ENCODE measurements at regions of chr9 and their contacts with region 1.

Region 1: DNA sequence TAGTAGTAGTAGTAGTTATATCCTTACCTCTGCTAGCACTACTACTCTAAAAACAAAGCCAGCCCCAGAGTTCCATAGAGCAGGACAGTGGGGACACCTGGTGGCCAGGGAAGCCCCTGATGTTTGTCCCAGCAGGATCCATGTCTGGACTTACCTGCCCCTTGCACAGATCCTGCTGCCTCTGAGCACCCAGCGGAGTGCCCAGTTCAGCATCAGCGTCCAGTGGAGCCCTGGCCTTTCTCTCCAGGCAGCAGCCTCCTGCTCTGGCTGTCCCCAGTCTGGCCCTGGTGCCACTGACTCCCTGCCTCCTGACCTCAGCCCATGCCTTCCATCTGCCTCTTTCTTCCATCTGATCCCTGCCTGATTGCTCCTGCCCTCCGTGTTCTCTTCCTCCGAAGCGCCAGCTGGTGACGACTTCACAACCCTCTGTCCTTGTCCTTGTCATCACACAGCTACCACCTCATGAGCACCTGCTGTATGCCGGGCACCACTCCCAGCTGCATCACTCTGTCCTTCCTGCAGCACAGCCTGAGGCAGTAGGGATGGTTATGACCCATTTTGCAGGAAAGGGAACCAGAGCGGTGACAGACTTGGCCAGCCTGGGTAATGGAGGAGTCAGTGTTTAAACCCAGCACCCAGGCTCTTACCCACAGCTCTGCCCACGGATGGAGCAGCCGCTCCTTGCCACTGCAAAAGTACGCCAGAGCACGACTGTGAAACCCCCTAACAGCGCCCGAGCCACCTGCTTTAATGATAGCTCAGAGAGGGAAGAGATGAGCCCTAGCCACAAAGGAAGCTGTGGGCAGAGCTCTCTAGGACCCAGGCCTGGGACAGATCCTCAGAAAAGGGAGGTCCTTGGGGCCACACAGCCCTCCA is 11.5 kb downstream of the SARDH start:
- DNase-seq: peak in 6 of 7 donors; percentile 19 to 78 (median 48)
- H3K4me3 ChIP-seq: no peak overlapping the region
- H3K27ac ChIP-seq: no peak overlapping the region
- H3K4me1 ChIP-seq: no peaks in the 10 kb centered on the region
- H3K27me3 ChIP-seq: no peaks in the 10 kb centered on the region
- CTCF ChIP-seq: peak; percentile 23 to 55 (median 45)
- POLR2A ChIP-seq: no peak

Region 2: GRCh38 chr9:133429641-133430161 is 296.9 kb before region 1 on chr9:
- intact Hi-C with region 1: no loop called
- DNase-seq: peak in 3 of 7 donors; percentile 17 to 41 (median 35)
- H3K4me3 ChIP-seq: no peak overlapping the region
- H3K27ac ChIP-seq: no peak overlapping the region
- H3K4me1 ChIP-seq: no peaks in the 10 kb centered on the region
- H3K27me3 ChIP-seq: peaks cover 8% of the 10 kb centered on the region
- CTCF ChIP-seq: peak in 5 of 6 experiments; percentile 18 to 46 (median 26)
- POLR2A ChIP-seq: no peak

Region 3: DNA sequence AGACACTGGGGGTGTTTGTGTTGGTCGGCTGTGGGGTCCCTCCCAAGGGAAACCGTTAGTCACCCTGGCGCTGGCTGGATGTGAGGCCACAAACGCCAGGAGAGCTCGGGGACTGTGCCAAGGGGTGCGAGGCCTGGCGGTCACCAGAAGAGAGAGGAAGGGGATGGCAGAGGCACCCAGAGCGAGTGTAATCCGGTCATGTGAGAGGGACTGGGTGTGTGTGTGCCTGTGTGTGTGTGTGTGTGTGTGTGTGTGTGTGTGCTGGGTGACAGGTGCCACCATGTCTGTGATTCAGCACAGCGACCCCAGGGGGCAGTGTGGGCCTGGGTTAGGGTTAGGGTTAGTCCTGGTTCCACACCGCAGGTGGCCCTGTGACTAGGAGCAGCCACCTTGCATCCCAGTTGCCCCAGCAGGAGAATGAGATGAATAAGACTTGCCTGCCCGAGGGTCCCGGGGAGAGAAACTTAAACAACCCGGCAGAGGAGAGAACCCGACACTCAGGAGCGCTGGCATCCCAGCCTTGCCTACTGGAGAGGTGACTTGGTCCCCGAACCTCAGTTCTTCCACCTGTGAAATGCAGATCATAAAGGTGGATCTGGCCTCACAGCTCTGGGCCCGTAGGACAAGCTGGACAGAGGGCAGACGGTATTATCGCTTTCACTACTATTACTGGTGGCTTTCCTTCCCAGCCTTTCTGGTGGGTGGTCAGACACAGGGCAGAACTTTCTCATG is 193.5 kb before region 1 on chr9:
- intact Hi-C with region 1: loop called in 1 of 2 experiments (anchors 10 kb)
- DNase-seq: peak; percentile 52 to 89 (median 69)
- H3K4me3 ChIP-seq: no peak overlapping the region
- H3K27ac ChIP-seq: peak overlapping the region in 2 of 5 donors; percentile 71 to 85
- H3K4me1 ChIP-seq: peaks cover 7 to 29% of the 10 kb centered on the region in 2 donors
- H3K27me3 ChIP-seq: peaks cover 4% of the 10 kb centered on the region
- CTCF ChIP-seq: peak in 5 of 6 experiments; percentile 16 to 84 (median 62)
- POLR2A ChIP-seq: no peak

Region 4: DNA sequence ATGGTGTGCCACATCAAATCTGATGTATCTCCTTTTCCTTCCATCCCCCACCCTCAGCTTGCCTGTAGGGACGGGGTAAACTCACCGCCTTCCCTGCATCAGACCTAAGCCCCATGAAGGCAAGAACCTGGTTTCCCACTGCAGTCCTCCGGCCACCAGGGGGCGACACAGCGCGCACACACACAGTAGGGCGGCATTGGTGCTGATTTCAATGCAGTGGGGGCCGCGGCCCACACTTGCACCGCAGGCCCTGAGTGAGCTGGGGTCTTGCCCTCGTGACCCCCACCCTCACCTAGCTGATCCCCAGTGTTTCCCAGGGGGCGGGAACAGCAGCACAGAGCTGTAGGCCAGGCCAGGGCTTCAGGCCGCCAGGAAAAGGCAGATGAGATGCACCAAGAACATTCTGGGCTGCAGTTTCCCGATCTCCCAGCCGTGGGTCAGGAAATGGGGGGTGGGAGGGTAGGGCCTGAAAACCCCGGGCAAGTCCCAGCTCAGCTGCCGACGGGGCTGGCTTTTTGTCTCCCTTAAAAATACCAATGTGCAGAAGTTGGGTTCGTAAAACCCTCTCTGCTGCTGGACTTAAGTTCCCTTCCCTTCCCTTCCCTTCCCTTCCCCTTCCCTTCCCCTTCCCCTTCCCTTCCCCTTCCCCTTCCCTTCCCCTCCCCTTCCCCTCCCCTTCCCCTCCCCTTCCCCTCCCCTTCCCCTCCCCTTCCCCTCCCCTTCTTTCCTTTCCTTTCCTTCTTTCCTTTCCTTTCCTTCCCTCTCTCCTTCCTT is 137.0 kb before region 1 on chr9:
- intact Hi-C with region 1: loop called in 1 of 2 experiments (anchors 10 kb)
- DNase-seq: no peak
- H3K4me3 ChIP-seq: no peak overlapping the region
- H3K27ac ChIP-seq: no peak overlapping the region
- H3K4me1 ChIP-seq: no peaks in the 10 kb centered on the region
- H3K27me3 ChIP-seq: peaks cover 14% of the 10 kb centered on the region
- CTCF ChIP-seq: peak in 5 of 6 experiments; percentile 6 to 36 (median 31)
- POLR2A ChIP-seq: no peak

Region 5: GRCh38 chr9:133683586-133684120 is 43.0 kb before region 1 on chr9:
- intact Hi-C with region 1: no loop called
- DNase-seq: peak in 3 of 7 donors; percentile 39 to 67 (median 56)
- H3K4me3 ChIP-seq: no peak overlapping the region
- H3K27ac ChIP-seq: peak overlapping the region in 4 of 5 donors; percentile 37 to 86 (median 67)
- H3K4me1 ChIP-seq: peaks cover 0 to 25% of the 10 kb centered on the region in 2 donors
- H3K27me3 ChIP-seq: no peaks in the 10 kb centered on the region
- CTCF ChIP-seq: peak in 1 of 6 experiments; percentile 9
- POLR2A ChIP-seq: no peak